ENCODE measurements at regions of chr6 and their contacts with region 1.

Region 1: DNA sequence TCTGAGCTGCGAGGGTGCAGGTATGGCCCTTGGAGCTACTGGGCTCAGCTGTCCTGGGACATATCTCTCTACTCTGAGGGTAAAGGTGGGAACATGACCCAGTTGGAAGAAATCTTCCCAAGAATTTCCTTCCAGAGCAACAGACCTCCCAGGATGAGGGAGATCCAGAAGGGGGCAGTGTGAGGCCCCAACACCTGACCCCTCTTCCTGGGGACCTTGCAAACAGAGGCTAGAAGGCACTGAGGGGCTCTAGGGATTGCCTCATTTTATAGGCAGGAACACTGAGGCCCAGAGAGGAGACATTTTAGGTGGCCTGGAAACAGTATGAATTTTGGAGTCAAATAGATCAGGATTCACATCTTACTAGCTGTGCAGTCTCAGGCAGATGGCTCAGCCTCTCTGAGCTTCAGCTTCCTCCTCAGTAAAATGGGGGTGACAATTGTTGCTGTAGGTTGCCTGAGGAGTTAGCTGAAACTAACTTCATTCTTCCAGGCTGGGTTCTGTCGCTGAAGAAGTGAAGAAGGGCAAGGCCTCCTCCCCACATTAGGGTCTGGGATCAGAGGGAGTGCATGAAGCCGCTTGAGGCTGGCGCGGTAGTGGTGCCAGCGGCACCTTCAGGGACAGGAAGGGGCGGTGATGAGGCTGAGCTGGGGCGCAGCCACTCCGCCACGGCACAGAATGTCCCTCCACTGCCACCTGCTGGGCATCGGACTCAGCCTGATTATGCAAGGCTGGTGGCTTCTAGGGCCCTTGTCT is 11.4 kb downstream of the KCNK17 start:
- DNase-seq: peak; percentile 69 to 84 (median 83)
- H3K4me3 ChIP-seq: no peak overlapping the region
- H3K27ac ChIP-seq: no peak overlapping the region
- H3K4me1 ChIP-seq: no peaks in the 10 kb centered on the region
- H3K27me3 ChIP-seq: no peaks in the 10 kb centered on the region
- CTCF ChIP-seq: peak; percentile 71 to 84 (median 78)
- EP300 ChIP-seq: no peak
- POLR2A ChIP-seq: no peak

Region 2: GRCh38 chr6:38871741-38872568 is 430.9 kb before region 1 on chr6:
- intact Hi-C with region 1: loop called in 1 of 4 experiments (anchors 10 kb)
- DNase-seq: peak in 2 of 5 donors; percentile 22 to 35
- H3K4me3 ChIP-seq: no peak overlapping the region
- H3K27ac ChIP-seq: no peak overlapping the region
- H3K4me1 ChIP-seq: no peaks in the 10 kb centered on the region
- H3K27me3 ChIP-seq: no peaks in the 10 kb centered on the region
- CTCF ChIP-seq: peak in 1 of 3 donors; percentile 15
- EP300 ChIP-seq: no peak
- POLR2A ChIP-seq: no peak

Measured in ovary (tissue), 10 donors.